ENCODE measurements at regions of chr7 and their contacts with region 1.

Region 1: GRCh38 chr7:35505066-35505465 is 189.9 kb downstream of the HERPUD2 start:
- DNase-seq: no peak

Region 2: GRCh38 chr7:35605760-35606159 is 100.7 kb after region 1 on chr7:
- CTCF ChIA-PET with region 1: interaction called, 10 read pairs
- POLR2A ChIA-PET with region 1: no interaction called
- DNase-seq: no peak

Measured in HEK293T (cell line).